Naive thymus-derived CD8-positive, alpha-beta T cell (primary cell): ENCODE measurements at regions of chr9 and their contacts with region 1.

Region 1: DNA sequence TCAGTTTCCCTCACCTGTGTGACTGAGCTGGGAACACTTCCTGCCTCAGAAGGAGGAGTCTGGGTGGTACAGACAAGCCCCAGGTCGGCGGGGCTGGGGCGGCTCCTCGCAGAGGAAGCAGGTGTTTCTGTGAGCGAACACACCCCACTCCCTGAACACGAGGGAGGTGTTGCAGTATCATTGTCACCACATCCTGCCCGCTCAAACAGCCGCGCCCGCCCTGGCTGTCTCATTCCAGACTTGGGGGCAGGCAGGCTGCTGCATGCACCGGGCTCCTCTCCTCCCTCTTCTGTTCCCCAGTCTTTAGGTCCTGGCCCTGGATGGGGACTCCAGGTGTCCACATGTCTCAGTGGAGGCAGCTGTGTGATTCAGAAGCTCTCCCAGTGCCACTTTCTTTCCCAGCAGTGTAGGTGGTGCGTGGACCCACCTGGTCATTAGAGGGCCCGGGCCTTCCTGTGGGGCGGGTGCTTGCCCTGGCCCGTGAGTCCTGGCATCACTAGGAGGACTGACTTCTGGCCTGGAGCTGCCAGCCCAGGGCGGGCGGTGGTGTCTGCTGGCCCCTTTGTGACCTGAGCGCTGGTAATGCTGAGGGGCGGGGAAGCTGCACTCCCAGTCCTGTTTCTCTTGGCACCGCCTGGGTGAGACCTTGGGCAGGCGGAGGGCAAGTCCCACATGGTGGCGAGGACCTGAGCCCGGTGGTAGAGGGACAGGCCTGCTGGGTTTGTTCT is 18.3 kb upstream of the PHYHD1 start:
- DNase-seq: peak; percentile 72 to 92 (median 84)
- ATAC-seq: peak; percentile 92 to 96
- H3K4me3 Mint-ChIP-seq: peak overlapping the region; percentile 76 to 89 (median 83)
- H3K27ac Mint-ChIP-seq: peak overlapping the region; percentile 90 to 99 (median 97)
- H3K4me1 Mint-ChIP-seq: peaks cover 25 to 80% (median 65%) of the 10 kb centered on the region in 4 donors
- H3K27me3 Mint-ChIP-seq: no peaks in the 10 kb centered on the region

Region 2: GRCh38 chr9:128881901-128882681 is 20.4 kb before region 1 on chr9 and contains the starts of genes KYAT1 and LRRC8A:
- POLR2A ChIA-PET with region 1: interaction called, 87 read pairs
- DNase-seq: peak; percentile 95 to 98 (median 98)
- ATAC-seq: peak; percentile 95 to 96
- H3K4me3 Mint-ChIP-seq: peak within 1 kb of the TSS; percentile 91 to 99 (median 96)
- H3K27ac Mint-ChIP-seq: peak within 1 kb of the TSS; percentile 90 to 99 (median 96)
- H3K4me1 Mint-ChIP-seq: peaks cover 41 to 67% (median 64%) of the 10 kb centered on the region in 4 donors
- H3K27me3 Mint-ChIP-seq: no peaks in the 10 kb centered on the region
- polyA plus RNA-seq, gene KYAT1: 9.3 to 10.8 (median 10.4) TPM
- polyA plus RNA-seq, gene LRRC8A: 17.4 to 36.7 (median 22.1) TPM

Region 3: DNA sequence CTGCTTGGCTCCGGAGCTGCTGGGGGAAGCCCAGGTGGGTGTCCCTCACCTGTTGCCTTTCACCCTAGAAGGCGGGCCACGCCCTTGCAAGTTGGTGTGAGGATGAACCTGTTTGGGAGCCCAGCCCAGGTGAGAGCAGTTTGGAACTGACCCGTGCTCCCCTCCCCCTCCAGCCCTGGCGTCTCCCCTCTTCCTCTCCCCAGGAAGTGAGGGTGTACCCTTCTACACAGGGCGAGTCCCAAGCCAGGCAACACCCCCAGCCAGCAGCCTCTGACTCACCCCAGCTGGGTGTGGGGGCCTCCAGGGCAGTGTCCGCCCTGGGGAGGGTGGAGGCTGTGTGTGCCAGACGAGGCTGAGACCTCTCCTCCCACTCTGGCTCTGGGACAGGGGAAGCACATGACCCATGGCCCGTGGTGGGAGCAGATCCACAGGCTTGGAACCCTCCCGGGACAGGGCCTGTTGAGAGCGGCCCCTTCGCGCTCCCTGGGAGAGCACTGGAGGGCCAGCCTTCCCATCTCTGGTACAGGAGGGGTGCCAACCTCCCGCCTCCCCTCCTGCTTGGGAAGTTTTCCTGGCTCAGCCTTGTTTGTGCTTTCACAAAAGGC is 10.1 kb before region 1 on chr9:
- POLR2A ChIA-PET with region 1: interaction called, 22 read pairs
- DNase-seq: peak in 3 of 10 donors; percentile 11 to 65 (median 22)
- ATAC-seq: peak; percentile 64 to 71
- H3K4me3 Mint-ChIP-seq: peak overlapping the region in 5 of 10 donors; percentile 2 to 75 (median 19)
- H3K27ac Mint-ChIP-seq: peak overlapping the region in 9 of 10 donors; percentile 16 to 92 (median 80)
- H3K4me1 Mint-ChIP-seq: peaks cover 17 to 73% (median 64%) of the 10 kb centered on the region in 4 donors
- H3K27me3 Mint-ChIP-seq: no peaks in the 10 kb centered on the region

Region 4: GRCh38 chr9:128921881-128922763 is 19.6 kb after region 1 on chr9:
- POLR2A ChIA-PET with region 1: interaction called, 31 read pairs
- DNase-seq: peak in 9 of 10 donors; percentile 8 to 69 (median 31)
- ATAC-seq: peak; percentile 81 to 95
- H3K4me3 Mint-ChIP-seq: peak overlapping the region; percentile 41 to 84 (median 76)
- H3K27ac Mint-ChIP-seq: peak overlapping the region in 9 of 10 donors; percentile 48 to 92 (median 78)
- H3K4me1 Mint-ChIP-seq: peaks cover 8 to 25% (median 16%) of the 10 kb centered on the region in 4 donors
- H3K27me3 Mint-ChIP-seq: no peaks in the 10 kb centered on the region